ENCODE measurements at regions of chr7 and their contacts with region 1.

Region 1: GRCh38 chr7:124784879-124785818 is 19.6 kb upstream of the GPR37 start:
- DNase-seq: no peak
- H3K4me3 ChIP-seq: no peak overlapping the region
- H3K27ac ChIP-seq: no peak overlapping the region
- H3K4me1 ChIP-seq: no peaks in the 10 kb centered on the region
- H3K27me3 ChIP-seq: no peaks in the 10 kb centered on the region
- CTCF ChIP-seq: peak; percentile 21 to 77 (median 74)

Region 2: GRCh38 chr7:124152859-124153692 is 632.1 kb before region 1 on chr7:
- intact Hi-C with region 1: loop called (anchors 10 kb)
- DNase-seq: no peak
- H3K4me3 ChIP-seq: no peak overlapping the region
- H3K27ac ChIP-seq: peak overlapping the region in 1 of 2 donors; percentile 5
- H3K4me1 ChIP-seq: no peaks in the 10 kb centered on the region
- H3K27me3 ChIP-seq: no peaks in the 10 kb centered on the region
- CTCF ChIP-seq: peak in 1 of 3 experiments; percentile 13